Activated CD4-positive, alpha-beta memory T cell treated with anti-CD3 and anti-CD28 coated beads, Interleukin-2, amount 10 ng/mL, durations not matched to agents 7 days and 5 days (primary cell): ENCODE measurements at regions of chr20 and their contacts with region 1.

Region 1: GRCh38 chr20:49668181-49668877 is 45.3 kb downstream of the B4GALT5 start:
- DNase-seq: peak; percentile 78
- H3K4me3 Mint-ChIP-seq: peak overlapping the region; percentile 70
- H3K27ac Mint-ChIP-seq: peak overlapping the region; percentile 84
- H3K4me1 Mint-ChIP-seq: peaks cover 50% of the 10 kb centered on the region
- H3K27me3 Mint-ChIP-seq: peaks cover 2% of the 10 kb centered on the region

Region 2: DNA sequence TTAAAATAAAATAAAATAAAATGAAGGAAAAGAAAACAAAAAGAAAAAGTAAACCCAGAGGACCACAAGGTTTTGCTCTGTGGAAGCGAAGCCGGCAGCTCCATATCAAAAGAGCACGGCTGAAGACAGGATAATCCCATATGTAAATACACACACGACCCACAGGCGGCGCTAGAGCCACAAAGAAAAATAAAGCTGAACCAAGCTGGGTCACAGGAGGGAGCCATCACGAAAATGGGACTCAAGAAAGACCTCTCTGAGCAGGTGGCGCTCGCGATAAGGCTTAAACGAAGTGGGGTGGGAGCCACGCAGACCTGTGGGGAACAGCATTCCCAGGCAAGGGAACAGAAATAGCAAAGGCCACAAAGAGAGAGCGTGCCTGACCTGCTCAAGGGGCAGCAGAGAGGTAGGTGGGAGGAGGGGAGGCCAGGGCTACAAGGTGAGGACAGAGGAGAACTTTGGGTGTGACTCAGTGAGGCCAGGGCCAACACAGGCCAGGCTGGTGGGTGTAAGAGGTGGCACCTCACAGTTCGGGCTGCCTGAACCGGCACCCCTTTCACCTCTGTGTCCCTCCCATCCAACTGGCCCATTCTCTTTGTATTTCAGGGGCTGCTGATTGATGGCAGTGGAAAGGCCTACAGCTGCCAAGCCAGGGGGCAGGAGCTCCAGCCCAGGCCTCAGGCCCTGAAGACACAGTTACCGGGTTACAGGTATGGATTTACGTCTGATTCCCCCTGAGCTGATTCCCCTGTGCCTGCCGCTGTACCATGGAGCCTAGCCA is 126.4 kb before region 1 on chr20:
- CTCF ChIA-PET with region 1: interaction called, 10 read pairs
- POLR2A ChIA-PET with region 1: no interaction called
- DNase-seq: peak; percentile 84
- H3K4me3 Mint-ChIP-seq: no peak overlapping the region
- H3K27ac Mint-ChIP-seq: peak overlapping the region; percentile 80
- H3K4me1 Mint-ChIP-seq: peaks cover 33% of the 10 kb centered on the region
- H3K27me3 Mint-ChIP-seq: peaks cover 2% of the 10 kb centered on the region

Region 3: GRCh38 chr20:49567421-49568334 is 100.7 kb before region 1 on chr20 and contains the start of gene PTGIS:
- CTCF ChIA-PET with region 1: no interaction called
- POLR2A ChIA-PET with region 1: no interaction called
- DNase-seq: no peak
- H3K4me3 Mint-ChIP-seq: no peak within 1 kb of the TSS
- H3K27ac Mint-ChIP-seq: no peak within 1 kb of the TSS
- H3K4me1 Mint-ChIP-seq: peaks cover 27% of the 10 kb centered on the region
- H3K27me3 Mint-ChIP-seq: peaks cover 54% of the 10 kb centered on the region
- total RNA-seq, gene PTGIS: 1.6 to 2.8 TPM

Region 4: DNA sequence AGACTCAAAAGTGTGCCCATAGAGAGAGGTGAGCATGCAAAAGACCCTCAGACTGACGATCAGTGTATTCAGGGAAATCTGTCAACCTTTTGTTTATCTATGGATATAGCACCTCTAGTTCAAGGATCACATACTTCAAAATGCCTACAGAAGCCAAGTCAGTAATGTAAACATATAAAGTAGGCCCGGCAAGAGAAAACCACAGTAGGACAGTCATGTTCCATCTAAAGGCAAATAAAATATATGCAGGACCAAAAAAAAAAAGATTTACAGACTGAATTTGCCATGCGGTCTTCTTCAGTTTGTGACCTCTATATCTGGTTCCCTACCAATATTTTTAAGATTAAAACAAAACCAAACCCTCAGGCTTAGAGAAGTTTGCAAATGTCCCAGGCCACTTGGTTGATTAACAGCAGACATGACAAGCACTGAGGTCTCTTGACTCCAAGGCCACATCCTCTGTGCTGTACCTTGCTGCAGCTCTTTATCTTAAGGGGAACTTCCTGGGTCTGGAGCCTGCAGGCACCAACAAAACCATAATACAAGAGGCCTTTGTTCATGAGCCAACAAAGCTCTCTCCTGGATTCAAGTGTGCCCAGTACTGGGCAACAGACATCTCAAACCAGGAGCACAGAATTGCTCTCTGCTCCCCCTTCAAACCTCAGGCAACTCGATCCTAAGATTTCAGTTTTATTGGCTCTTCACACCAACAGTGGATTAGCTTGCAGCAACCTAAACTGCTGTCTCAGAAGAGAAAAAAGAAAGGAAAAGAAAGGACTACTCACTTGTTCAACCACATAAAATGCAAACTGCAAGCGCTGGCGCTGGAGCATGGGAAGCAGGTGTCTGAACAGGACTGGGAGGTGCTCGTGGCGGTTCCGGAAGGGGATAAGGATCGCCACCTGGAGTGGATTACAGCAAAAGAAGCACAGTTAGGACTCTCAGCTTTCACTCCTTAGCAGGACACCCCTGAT is 26.4 kb before region 1 on chr20:
- CTCF ChIA-PET with region 1: interaction called, 5 read pairs
- POLR2A ChIA-PET with region 1: interaction called, 11 read pairs
- DNase-seq: peak; percentile 36
- H3K4me3 Mint-ChIP-seq: no peak overlapping the region
- H3K27ac Mint-ChIP-seq: peak overlapping the region; percentile 68
- H3K4me1 Mint-ChIP-seq: peaks cover 21% of the 10 kb centered on the region
- H3K27me3 Mint-ChIP-seq: no peaks in the 10 kb centered on the region

Region 5: DNA sequence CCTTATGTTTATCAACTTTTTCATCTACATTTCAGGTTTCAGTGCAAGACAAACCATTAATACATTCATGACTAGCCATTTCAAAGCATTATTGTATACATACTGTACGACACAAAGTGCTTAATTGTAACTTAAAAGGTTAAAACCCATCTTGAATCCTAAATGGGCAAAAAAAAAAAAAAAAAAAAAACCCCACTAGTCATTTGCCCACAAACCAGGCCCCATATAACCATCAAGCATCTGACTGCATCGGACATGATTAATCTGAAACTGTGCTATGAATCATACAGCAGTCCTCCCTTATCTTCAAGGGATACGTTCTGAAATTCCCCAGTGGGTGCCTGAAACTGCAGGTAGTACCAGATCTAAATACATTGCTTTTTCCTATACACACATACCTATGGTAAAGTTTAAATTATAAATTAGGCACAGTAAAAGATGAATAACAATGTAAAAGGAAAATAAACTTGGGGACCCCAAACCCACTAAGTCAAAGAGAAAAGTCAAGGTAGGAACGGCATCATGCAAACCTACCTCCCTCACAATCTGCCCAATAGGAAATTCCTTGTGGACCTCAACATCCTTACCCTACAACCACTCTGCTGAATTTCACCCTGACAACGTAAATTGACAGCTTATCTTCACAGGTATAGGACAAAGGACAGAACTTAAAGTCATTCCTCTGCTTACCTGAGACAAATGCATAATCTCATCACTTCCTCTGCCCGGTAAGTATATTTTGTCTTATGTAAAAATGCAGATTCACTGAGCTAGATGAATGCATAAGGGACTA is 31.1 kb after region 1 on chr20:
- CTCF ChIA-PET with region 1: no interaction called
- POLR2A ChIA-PET with region 1: interaction called, 12 read pairs
- DNase-seq: no peak
- H3K4me3 Mint-ChIP-seq: no peak overlapping the region
- H3K27ac Mint-ChIP-seq: no peak overlapping the region
- H3K4me1 Mint-ChIP-seq: peaks cover 55% of the 10 kb centered on the region
- H3K27me3 Mint-ChIP-seq: no peaks in the 10 kb centered on the region

Region 6: DNA sequence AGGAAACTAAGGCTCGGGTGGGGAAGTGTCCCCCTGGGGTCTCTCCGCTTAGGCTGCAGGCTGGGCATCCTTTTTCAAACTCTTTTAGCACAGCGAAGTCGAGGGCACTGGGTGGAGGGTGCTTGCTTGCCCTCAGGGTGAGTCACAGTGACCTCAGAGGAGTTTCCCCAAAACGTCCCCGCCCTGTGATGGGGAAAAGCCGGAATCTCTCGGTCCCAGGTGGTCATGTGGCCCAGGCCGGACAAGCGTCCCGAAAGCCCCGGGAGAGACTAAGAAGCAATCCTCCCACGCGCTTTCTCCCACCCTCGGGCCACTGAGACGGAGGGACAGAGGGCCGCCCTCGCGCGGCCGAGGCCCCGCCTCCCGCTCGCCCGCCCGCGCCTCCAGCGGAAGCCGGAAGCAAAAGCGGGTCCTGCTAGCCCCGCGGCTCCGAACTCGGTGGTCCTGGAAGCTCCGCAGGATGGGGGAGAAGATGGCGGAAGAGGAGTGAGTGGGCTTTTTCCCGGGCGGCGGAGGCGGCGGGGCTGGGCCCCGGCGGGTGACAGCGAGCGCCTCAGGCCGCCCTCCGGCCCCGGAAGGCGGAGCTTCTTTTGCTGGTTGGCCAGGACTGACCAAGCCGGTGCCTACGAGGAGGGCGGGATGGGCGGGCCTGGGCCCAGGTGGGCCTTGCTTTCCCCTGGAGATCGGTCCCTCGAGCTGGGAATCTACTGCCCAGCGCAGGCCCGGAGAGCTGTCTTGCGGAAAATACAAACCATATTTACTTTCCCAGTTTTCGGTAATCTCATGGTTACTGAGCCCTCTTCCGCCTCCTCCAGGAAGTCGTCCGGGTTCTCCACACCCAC is 144.4 kb after region 1 on chr20 and contains the start of gene SLC9A8:
- CTCF ChIA-PET with region 1: interaction called, 4 read pairs
- POLR2A ChIA-PET with region 1: interaction called, 16 read pairs
- DNase-seq: peak; percentile 83
- H3K4me3 Mint-ChIP-seq: peak within 1 kb of the TSS; percentile 94
- H3K27ac Mint-ChIP-seq: peak within 1 kb of the TSS; percentile 93
- H3K4me1 Mint-ChIP-seq: peaks cover 44% of the 10 kb centered on the region
- H3K27me3 Mint-ChIP-seq: no peaks in the 10 kb centered on the region
- total RNA-seq, gene SLC9A8: 18.0 to 21.0 TPM